Right lobe of liver (tissue), 6 donors: ENCODE measurements at regions of chr17 and their contacts with region 1.

Region 1: GRCh38 chr17:7351665-7352501 is at the start of gene KCTD11:
- DNase-seq: peak; percentile 92 to 93 (median 92)
- ATAC-seq: peak; percentile 70 to 84 (median 76)
- H3K4me3 ChIP-seq: peak within 1 kb of the TSS; percentile 71 to 96 (median 86)
- H3K27ac ChIP-seq: peak within 1 kb of the TSS; percentile 93 to 98 (median 97)
- H3K4me1 ChIP-seq: peaks cover 0 to 26% (median 7%) of the 10 kb centered on the region in 4 donors
- H3K27me3 ChIP-seq: no peaks in the 10 kb centered on the region
- CTCF ChIP-seq: peak in 3 of 4 donors; percentile 31 to 35 (median 32)
- POLR2A ChIP-seq: peak; percentile 73
- total RNA-seq, gene KCTD11: 2.2 to 4.4 (median 2.9) TPM

Region 2: DNA sequence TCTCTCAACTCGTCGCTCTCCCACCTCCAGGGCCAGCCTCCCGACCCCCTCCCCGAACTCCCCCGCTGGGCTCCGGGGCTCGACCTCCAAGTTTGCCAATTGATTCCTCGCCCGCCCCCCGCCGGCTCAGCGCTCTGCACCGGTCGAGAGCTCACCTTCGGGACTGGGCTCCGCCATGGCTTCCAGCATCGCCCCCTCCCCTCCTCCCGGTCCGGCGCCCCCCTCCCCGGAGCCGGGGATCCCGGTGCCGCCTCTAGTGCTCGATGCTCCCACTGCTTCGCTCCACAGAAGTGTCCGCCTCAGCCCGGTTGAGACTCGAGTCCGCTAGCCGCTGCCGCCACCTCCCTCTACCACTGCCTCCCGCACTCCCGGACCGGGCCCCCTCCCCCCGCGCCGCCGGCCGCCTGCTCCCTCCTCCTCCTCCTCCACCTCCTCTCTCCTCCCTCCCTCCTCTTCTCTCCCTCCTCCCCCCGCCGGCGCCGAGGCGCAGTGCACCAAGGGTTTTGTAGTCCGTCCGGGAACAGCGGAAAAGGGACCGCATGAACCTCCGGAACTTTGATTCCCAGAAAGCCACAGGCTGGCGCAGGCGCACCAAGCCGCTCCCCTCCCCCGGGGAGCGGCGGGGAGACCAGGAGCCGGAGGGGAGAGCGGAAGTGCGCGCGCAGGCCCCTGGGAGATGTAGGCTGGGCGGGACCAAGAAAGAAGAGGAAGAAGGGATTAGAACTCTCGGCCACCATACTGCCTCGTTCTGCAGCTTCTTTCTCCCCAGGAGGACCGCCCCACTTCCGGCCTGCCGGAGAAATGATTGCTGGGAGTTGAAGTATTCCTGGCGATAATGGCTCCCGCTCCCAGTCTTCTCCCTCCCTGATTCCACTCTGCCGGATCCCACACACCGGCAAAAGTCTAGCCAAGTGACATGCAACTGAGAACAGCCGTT is 112.5 kb before region 1 on chr17 and contains the start of gene PHF23:
- intact Hi-C with region 1: no loop called
- DNase-seq: peak; percentile 99 to 100 (median 100)
- ATAC-seq: peak; percentile 66 to 84 (median 74)
- H3K4me3 ChIP-seq: peak within 1 kb of the TSS; percentile 94 to 96 (median 94)
- H3K27ac ChIP-seq: peak within 1 kb of the TSS; percentile 75 to 99 (median 93)
- H3K4me1 ChIP-seq: peaks cover 0 to 32% (median 11%) of the 10 kb centered on the region in 4 donors
- H3K27me3 ChIP-seq: no peaks in the 10 kb centered on the region
- CTCF ChIP-seq: peak in 1 of 4 donors; percentile 38
- POLR2A ChIP-seq: peak; percentile 53
- total RNA-seq, gene PHF23: 16.0 to 24.3 (median 18.2) TPM

Region 3: DNA sequence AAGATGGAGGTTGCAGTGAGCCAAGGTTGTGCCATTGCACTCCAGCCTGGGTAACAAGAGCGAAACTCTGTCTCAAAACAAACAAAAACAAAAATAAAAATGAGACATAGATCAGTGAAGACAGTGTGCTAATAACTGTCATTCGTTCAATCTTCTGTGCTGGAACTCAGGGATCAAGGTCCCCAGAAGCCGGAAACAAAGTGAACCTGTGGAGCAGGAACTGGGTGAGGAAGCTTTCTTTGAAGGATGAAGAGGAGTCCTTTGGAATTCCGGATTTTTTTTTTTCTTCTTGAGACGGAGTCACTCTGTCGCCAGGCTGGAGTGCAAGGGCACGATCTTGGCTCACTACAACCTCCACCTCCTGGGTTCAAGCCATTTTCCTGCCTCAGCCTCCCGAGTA is 72.4 kb before region 1 on chr17:
- intact Hi-C with region 1: loop called in 1 of 2 experiments (anchors 10 kb)
- DNase-seq: no peak
- ATAC-seq: no peak
- H3K4me3 ChIP-seq: no peak overlapping the region
- H3K27ac ChIP-seq: no peak overlapping the region
- H3K4me1 ChIP-seq: peaks cover 0 to 20% (median 2%) of the 10 kb centered on the region in 4 donors
- H3K27me3 ChIP-seq: no peaks in the 10 kb centered on the region
- CTCF ChIP-seq: no peak
- POLR2A ChIP-seq: no peak

Region 4: GRCh38 chr17:7435221-7435675 is 83.4 kb after region 1 on chr17 and contains the start of gene TMEM102:
- intact Hi-C with region 1: loop called in 1 of 2 experiments (anchors 5 kb)
- DNase-seq: peak; percentile 95 to 98 (median 96)
- ATAC-seq: peak; percentile 85 to 88 (median 87)
- H3K4me3 ChIP-seq: peak within 1 kb of the TSS; percentile 44 to 63 (median 59)
- H3K27ac ChIP-seq: peak within 1 kb of the TSS; percentile 17 to 65 (median 46)
- H3K4me1 ChIP-seq: peaks cover 0 to 33% (median 12%) of the 10 kb centered on the region in 4 donors
- H3K27me3 ChIP-seq: no peaks in the 10 kb centered on the region
- CTCF ChIP-seq: no peak
- POLR2A ChIP-seq: peak; percentile 9
- total RNA-seq, gene TMEM102: 2.3 to 8.4 (median 4.0) TPM

Region 5: GRCh38 chr17:7515911-7516610 is 164.2 kb after region 1 on chr17:
- intact Hi-C with region 1: loop called in 1 of 2 experiments (anchors 10 kb)
- DNase-seq: no peak
- ATAC-seq: peak in 3 of 4 donors; percentile 51 to 77 (median 72)
- H3K4me3 ChIP-seq: no peak overlapping the region
- H3K27ac ChIP-seq: no peak overlapping the region
- H3K4me1 ChIP-seq: peaks cover 0 to 11% (median 0%) of the 10 kb centered on the region in 4 donors
- H3K27me3 ChIP-seq: no peaks in the 10 kb centered on the region
- CTCF ChIP-seq: no peak
- POLR2A ChIP-seq: no peak